ENCODE measurements at regions of chr17 and their contacts with region 1.

Region 1: GRCh38 chr17:37047631-37048104 is 98.9 kb downstream of the AATF start:
- DNase-seq: peak; percentile 57
- H3K4me3 ChIP-seq: no peak overlapping the region
- H3K27ac ChIP-seq: no peak overlapping the region
- H3K4me1 ChIP-seq: no peaks in the 10 kb centered on the region
- H3K27me3 ChIP-seq: no peaks in the 10 kb centered on the region
- CTCF ChIP-seq: peak; percentile 90

Region 2: DNA sequence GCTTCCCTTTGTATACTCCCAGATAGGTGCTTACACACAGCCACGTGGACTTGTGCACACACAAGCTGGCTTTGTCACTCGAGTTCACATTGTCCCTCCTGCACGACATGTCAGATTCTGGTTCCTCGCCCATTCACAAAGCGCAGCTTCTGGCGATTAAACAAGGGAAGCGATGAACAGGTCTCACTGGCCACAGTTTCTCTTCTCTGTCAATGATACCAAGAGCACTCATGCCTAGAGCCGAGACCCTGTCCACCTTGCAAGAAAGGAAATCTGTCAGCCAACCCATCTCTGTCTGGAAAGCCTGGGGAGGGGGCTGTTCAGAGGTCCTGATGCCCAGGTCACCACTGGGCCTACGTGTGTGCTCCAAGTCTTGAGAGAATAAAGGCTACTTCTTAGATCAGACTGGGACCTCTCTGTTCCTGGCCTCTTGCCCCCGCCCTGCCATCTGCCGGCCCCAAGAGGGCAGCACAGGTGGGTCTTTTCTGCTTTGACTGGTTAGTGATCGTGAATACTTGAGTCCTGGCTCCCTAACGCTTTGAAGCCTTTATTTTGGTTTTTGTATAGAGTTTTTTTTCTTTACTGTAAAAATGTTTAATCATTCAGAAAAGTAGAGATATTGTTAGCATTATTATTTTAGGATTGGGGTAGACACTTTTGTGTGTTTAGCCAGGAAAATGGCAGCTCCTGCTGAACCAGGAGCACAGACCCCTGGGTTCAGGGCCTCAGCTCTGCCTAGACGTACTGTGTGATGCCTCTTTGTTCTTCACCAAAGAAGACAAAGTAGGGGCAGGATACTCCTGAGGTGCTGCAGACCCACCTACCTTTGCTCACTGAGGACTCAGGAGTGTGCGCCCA is 341.6 kb before region 1 on chr17:
- CTCF ChIA-PET with region 1: interaction called, 3 read pairs
- dilution Hi-C with region 1: no loop called
- in situ Hi-C with region 1: no loop called
- intact Hi-C with region 1: loop called (anchors 1 kb)
- DNase-seq: peak; percentile 14
- H3K4me3 ChIP-seq: no peak overlapping the region
- H3K27ac ChIP-seq: no peak overlapping the region
- H3K4me1 ChIP-seq: no peaks in the 10 kb centered on the region
- H3K27me3 ChIP-seq: peaks cover 3% of the 10 kb centered on the region
- CTCF ChIP-seq: peak; percentile 74 to 76

Region 3: GRCh38 chr17:36849871-36850348 is 197.8 kb before region 1 on chr17:
- CTCF ChIA-PET with region 1: no interaction called
- dilution Hi-C with region 1: no loop called
- in situ Hi-C with region 1: no loop called
- intact Hi-C with region 1: loop called (anchors 1 kb)
- DNase-seq: peak; percentile 58
- H3K4me3 ChIP-seq: no peak overlapping the region
- H3K27ac ChIP-seq: peak overlapping the region; percentile 20
- H3K4me1 ChIP-seq: peaks cover 29% of the 10 kb centered on the region
- H3K27me3 ChIP-seq: no peaks in the 10 kb centered on the region
- CTCF ChIP-seq: peak; percentile 6 to 15

Region 4: DNA sequence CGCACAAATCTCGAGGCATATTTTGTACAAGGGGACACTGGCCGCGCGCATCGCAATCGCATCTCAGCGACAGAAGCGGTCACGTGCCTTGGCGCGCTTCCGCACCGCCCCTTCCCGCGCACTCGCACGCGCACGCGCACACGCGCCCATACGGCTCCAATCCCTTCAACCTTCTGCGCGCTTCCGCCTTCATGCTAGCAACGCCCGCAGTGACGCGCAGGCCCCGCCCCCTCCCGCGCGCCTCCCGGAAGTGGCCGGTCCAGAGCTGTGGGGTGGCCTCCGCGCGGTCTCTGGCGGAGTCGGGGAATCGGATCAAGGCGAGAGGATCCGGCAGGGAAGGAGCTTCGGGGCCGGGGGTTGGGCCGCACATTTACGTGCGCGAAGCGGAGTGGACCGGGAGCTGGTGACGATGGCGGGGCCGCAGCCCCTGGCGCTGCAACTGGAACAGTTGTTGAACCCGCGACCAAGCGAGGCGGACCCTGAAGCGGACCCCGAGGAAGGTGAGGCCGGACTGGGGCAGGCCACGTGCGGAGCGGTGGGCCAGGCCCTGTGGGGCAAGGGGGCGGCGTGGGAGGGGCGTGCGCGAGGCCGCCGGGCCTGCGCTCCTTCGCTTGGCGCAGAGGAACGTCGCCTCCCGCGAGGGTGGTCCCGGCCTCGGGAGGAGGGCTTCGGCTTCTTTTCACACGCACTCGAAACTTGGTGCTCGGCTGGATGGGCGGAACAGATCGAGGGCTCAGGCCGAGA is 98.8 kb before region 1 on chr17 and contains the start of gene AATF:
- CTCF ChIA-PET with region 1: no interaction called
- dilution Hi-C with region 1: no loop called
- in situ Hi-C with region 1: no loop called
- intact Hi-C with region 1: loop called (anchors 5 kb)
- DNase-seq: peak; percentile 95
- H3K4me3 ChIP-seq: peak within 1 kb of the TSS; percentile 78 to 86 (median 78)
- H3K27ac ChIP-seq: peak within 1 kb of the TSS; percentile 74
- H3K4me1 ChIP-seq: peaks cover 18% of the 10 kb centered on the region
- H3K27me3 ChIP-seq: peaks cover 28% of the 10 kb centered on the region
- CTCF ChIP-seq: no peak
- total RNA-seq, gene AATF: 21.2 to 70.3 TPM

Region 5: GRCh38 chr17:37025847-37026530 is 21.7 kb before region 1 on chr17:
- CTCF ChIA-PET with region 1: no interaction called
- dilution Hi-C with region 1: no loop called
- in situ Hi-C with region 1: no loop called
- intact Hi-C with region 1: no loop called
- DNase-seq: no peak
- H3K4me3 ChIP-seq: no peak overlapping the region
- H3K27ac ChIP-seq: no peak overlapping the region
- H3K4me1 ChIP-seq: no peaks in the 10 kb centered on the region
- H3K27me3 ChIP-seq: no peaks in the 10 kb centered on the region
- CTCF ChIP-seq: no peak